Activated CD4-positive, alpha-beta memory T cell treated with anti-CD3 and anti-CD28 coated beads, Interleukin-2, amount 10 ng/mL, durations not matched to agents 7 days and 5 days (primary cell): ENCODE measurements at regions of chr7 and their contacts with region 1.

Region 1: GRCh38 chr7:30062591-30062990 is 34.4 kb downstream of the PLEKHA8 start:
- DNase-seq: no peak
- H3K4me3 Mint-ChIP-seq: no peak overlapping the region
- H3K27ac Mint-ChIP-seq: no peak overlapping the region
- H3K4me1 Mint-ChIP-seq: peaks cover 4% of the 10 kb centered on the region
- H3K27me3 Mint-ChIP-seq: no peaks in the 10 kb centered on the region

Region 2: DNA sequence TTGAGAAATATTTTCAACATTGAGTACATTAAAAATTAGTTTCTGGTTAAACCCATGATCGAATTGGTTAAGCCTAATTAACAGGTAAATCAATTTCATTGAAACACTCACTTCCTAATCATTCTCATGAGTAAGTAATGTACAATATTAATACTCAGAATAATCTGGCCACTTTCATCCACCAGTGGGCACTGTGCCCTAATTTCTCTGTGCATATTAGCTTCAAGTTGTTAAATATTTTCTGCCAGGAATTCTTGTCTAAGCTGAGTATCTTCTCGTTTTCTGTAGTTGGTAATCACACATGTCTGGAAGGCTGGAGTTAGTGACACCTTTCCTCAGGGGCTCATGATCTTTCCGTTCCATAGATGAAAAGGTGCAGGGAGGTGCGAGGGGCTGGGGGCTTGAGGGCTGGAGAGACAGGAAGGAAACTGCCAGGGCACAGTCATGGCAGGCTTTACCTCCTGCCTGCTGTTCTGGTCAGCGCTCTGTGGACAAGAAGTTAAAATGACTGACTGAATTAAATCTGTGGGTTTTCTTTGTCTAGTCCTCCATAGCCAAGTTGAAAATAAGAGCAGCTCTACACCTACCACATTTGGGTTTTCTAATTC is 184.4 kb before region 1 on chr7:
- CTCF ChIA-PET with region 1: interaction called, 12 read pairs
- POLR2A ChIA-PET with region 1: no interaction called
- DNase-seq: no peak
- H3K4me3 Mint-ChIP-seq: no peak overlapping the region
- H3K27ac Mint-ChIP-seq: no peak overlapping the region
- H3K4me1 Mint-ChIP-seq: no peaks in the 10 kb centered on the region
- H3K27me3 Mint-ChIP-seq: peaks cover 19% of the 10 kb centered on the region

Region 3: DNA sequence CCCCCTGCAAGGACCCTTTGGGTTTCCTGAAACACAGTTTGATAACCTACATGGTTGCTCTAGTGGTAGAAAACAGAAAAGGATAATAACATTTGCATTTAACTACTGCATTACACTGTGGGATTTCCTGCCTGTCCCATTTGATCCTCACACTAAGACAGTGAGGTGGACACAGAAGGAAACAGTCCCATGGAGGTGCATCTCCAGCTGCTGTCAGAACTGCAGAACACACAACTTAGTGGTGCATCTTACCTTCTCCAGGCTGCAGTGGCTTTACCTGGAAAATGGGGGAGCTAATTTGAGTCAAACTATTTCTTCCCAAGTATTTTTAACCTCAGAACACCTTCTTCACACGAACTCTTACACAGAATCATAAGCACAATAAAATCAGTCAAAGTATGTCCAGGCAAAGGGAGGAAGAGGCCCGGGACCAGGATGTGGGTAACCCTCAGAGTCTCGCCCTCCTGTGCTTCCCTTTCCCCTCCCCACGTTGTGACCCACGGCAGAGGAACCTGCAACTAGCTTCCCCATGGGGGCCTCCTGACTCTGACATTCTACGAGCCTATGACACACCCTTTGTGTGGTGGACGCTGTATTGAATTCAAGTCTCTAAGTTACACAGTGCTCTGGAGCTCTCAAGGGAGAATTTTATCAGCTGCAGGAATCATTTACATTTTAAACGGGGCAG is 106.6 kb before region 1 on chr7:
- CTCF ChIA-PET with region 1: interaction called, 10 read pairs
- POLR2A ChIA-PET with region 1: no interaction called
- DNase-seq: peak; percentile 45
- H3K4me3 Mint-ChIP-seq: no peak overlapping the region
- H3K27ac Mint-ChIP-seq: peak overlapping the region; percentile 62
- H3K4me1 Mint-ChIP-seq: peaks cover 22% of the 10 kb centered on the region
- H3K27me3 Mint-ChIP-seq: peaks cover 5% of the 10 kb centered on the region

Region 4: GRCh38 chr7:30048582-30048981 is 14.0 kb before region 1 on chr7:
- CTCF ChIA-PET with region 1: interaction called, 10 read pairs
- POLR2A ChIA-PET with region 1: no interaction called
- DNase-seq: no peak
- H3K4me3 Mint-ChIP-seq: no peak overlapping the region
- H3K27ac Mint-ChIP-seq: no peak overlapping the region
- H3K4me1 Mint-ChIP-seq: peaks cover 5% of the 10 kb centered on the region
- H3K27me3 Mint-ChIP-seq: no peaks in the 10 kb centered on the region

Region 5: DNA sequence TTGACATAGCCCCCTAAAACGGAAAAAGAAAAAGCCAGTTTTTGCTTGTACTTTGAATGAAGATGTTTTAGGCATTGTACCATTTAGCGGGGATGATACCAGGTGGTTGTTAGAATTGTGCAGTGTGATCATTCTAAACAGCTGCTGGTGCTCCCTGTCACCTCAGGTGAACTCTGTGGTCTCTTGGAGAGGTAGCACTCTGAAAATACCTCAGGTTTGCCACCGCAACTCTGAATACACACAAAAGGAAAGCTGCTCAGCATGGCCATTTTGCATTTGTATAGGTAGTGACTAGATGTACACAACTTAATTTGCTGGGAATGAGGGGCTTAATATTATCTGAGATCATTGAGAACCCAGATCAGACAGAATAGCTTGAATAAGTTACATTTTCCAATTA is 18.2 kb after region 1 on chr7:
- CTCF ChIA-PET with region 1: interaction called, 10 read pairs
- POLR2A ChIA-PET with region 1: no interaction called
- DNase-seq: no peak
- H3K4me3 Mint-ChIP-seq: no peak overlapping the region
- H3K27ac Mint-ChIP-seq: no peak overlapping the region
- H3K4me1 Mint-ChIP-seq: no peaks in the 10 kb centered on the region
- H3K27me3 Mint-ChIP-seq: no peaks in the 10 kb centered on the region

Region 6: DNA sequence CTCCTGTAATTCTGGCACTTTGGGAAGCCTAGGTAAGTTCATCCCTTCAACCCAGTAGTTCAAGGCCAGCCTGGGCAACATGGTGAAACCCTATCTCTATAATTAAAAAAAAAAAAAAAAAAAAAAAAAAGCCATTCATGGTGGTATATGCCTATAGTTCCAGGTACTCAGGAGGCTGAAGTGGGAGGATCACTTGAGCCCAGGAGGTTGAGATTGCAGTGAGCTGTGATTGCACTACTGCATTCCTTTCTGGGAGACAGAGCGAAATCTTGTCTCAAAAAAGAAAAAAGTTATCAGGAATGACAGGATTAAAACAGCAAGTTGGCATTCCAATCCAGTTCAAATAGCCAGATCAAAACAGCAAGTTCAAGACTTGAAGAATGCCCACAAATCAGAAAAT is 42.6 kb after region 1 on chr7:
- CTCF ChIA-PET with region 1: no interaction called
- POLR2A ChIA-PET with region 1: no interaction called
- DNase-seq: no peak
- H3K4me3 Mint-ChIP-seq: no peak overlapping the region
- H3K27ac Mint-ChIP-seq: no peak overlapping the region
- H3K4me1 Mint-ChIP-seq: no peaks in the 10 kb centered on the region
- H3K27me3 Mint-ChIP-seq: no peaks in the 10 kb centered on the region